BJ (cell line): ENCODE measurements at regions of chr3 and their contacts with region 1.

Region 1: DNA sequence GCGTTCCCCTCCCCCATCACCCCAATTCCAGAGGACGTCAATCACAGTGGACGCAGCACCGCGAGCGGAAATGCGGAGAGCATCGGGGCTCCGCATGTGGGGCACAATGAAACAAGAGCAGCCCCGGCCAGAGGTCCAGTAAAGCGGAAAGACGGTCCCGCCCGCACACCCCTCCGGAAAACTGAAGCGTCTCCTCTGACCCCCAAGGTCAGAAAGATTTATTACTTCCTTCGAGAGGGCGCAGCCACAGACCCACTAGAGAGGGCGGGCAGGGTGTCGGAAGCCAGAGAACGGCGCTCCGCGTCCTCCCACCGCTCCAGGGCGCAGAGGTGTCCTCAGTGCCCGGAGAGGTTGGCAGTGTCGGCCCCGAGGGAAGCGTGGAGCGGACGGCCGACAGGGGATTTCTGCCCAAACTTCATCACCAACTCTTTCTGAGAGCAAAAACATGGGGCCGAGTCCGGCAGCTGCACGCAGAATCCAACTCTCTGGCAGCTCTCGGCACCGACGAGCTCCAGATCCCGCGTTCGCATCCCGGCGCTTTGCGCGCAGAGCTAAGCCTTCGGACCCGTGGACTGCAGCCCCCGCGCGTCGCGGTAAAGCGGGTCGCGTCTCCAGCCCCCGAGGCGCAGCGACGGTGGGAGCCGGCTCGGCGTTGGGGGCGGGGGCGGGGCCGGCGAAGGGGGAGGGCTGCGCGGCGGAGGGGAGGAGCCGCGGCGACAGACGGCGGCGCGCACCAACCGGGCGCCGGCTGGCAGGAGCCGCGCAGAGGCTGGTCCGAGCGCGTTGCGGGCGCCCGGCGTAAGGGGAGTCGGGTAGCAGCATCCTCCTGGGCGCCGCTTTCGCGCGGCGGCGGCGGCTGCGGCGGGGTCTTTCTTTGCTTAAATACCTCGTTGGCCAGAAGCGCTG is at the start of gene CHST2:
- DNase-seq: no peak
- H3K4me3 ChIP-seq: peak within 1 kb of the TSS; percentile 82
- H3K27me3 ChIP-seq: no peaks in the 10 kb centered on the region; the same call in none of the 2 replicates
- CTCF ChIP-seq: peak; percentile 25; the same call in 1 of the 2 replicates
- polyA plus RNA-seq, gene CHST2: 0.38 and 0.39 TPM in 2 replicates

Region 2: DNA sequence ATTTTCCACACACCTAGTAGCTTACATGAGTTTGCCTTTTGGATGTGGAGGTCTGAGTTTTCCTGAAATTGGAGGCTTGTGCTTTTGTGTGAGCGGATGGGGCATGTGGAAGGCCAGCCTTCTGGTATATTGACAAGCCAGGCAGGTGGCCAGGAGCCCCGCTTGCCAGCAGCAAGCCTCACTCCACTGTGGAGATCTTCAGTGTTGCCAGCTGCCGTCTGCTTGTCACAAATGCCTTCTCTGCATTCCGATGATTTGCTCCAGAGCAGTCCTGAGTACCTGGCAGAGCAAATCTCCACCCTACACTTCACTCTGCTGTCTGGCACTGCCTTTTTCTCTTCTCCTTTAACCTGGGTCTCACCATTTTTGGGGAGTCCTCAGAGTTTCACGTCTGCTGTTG is 28.8 kb before region 1 on chr3:
- CTCF ChIA-PET with region 1: no interaction called
- POLR2A ChIA-PET with region 1: no interaction called
- DNase-seq: no peak
- H3K4me3 ChIP-seq: no peak overlapping the region
- H3K27me3 ChIP-seq: peaks cover 2% of the 10 kb centered on the region; the same call in 1 of the 2 replicates
- CTCF ChIP-seq: no peak

Region 3: GRCh38 chr3:143132246-143132980 is 13.2 kb after region 1 on chr3:
- CTCF ChIA-PET with region 1: interaction called, 11 read pairs
- POLR2A ChIA-PET with region 1: no interaction called
- DNase-seq: no peak
- H3K4me3 ChIP-seq: no peak overlapping the region
- H3K27me3 ChIP-seq: no peaks in the 10 kb centered on the region
- CTCF ChIP-seq: no peak

Region 4: GRCh38 chr3:143644370-143645089 is 525.3 kb after region 1 on chr3:
- CTCF ChIA-PET with region 1: interaction called, 15 read pairs
- POLR2A ChIA-PET with region 1: no interaction called
- DNase-seq: peak; percentile 15
- H3K4me3 ChIP-seq: no peak overlapping the region
- H3K27me3 ChIP-seq: peaks cover 1% of the 10 kb centered on the region; the same call in 1 of the 2 replicates
- CTCF ChIP-seq: peak; percentile 62